Posterior cingulate gyrus (tissue), 11 donors: ENCODE measurements at regions of chr12 and their contacts with region 1.

Region 1: DNA sequence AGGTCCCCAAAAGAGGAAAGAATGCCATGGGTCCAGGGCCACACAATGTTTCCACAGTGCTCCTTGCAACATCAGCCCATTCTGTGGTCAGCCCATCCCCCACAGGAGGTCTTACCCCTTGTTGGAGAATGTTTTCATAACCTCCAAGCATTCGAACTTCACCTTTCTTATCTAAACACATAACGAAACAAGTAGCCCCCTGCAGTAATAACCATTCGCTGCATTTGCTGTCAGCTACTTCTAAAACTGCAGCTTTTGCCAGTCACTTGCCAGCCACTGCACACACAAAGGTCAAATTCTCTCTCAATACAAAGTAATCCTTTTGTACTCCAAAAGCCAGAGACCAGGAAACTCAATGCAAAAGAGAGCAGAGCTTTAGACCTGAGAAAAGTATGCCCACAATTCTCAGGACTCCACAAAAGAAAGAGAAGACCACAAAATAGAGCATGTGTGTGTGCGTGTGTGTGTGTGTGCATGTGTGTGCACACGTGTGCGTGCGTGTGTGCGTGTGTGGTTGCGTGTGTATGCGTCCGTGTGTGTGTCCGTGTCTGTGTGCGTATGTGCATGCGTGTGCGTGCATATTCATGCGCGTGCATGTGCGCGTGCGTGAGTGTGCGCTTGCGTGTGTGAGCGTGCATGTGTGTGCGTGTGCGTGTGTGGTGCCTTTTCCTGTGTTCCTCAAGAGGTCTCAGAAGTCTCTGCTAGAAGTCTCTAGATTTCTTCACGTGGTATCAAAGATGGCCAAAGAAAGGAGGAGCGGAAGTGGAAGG is 31.7 kb upstream of the NINJ2 start:
- DNase-seq: peak in 2 of 10 donors; percentile 36 to 41

Region 2: GRCh38 chr12:662566-663292 is 32.2 kb before region 1 on chr12:
- intact Hi-C with region 1: loop called (anchors 5 kb)
- DNase-seq: peak in 1 of 10 donors; percentile 23